ENCODE measurements at regions of chr9 and their contacts with region 1.

Region 1: DNA sequence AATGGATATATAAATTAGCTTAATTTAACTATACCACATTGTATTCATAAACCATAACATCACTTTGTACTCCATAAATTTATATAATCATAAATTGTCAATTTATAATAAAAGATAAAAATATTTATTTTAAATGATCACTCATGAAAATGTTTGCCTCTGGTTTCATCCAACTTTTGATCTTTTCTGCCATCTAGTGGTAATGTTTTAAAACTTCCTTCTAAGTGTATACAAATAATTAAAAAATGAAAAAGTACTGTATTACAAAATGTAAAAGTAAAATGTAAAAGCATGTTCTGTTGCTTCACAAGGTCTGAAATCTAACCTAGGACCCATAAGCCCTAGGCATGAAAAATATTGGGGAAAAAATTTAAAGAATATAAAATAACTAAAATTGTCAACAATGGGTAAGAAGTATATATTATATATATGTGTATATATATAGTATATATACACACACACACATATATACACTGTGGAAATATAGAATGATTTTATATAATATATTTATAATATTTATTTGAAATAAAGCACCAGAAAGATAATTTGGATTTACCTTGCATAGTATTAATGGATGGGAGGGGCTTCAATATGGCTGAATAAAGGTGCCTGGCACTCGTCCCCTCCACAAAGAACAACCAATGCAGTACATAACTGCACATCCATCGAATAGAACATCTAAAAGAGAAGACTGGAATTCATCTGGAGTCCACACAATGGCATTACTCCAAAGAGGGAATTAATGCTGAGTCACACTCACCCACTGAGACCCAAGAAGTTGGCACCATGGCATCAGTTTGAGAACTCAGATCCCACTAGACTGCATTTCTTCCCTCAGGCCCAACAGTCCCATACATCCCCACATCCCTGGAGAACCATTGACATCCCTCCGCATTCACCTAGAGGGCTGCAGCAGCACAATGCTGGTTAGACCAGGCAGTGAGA is 32.5 kb downstream of the ANXA1 start:
- DNase-seq: no peak
- ATAC-seq: no peak
- H3K4me3 ChIP-seq: no peak overlapping the region
- H3K27ac ChIP-seq: no peak overlapping the region
- H3K4me1 ChIP-seq: peaks cover 0 to 19% (median 0%) of the 10 kb centered on the region in 9 donors
- H3K27me3 ChIP-seq: peaks cover 0 to 3% (median 0%) of the 10 kb centered on the region in 7 donors
- CTCF ChIP-seq: peak; percentile 41 to 76 (median 59)

Region 2: DNA sequence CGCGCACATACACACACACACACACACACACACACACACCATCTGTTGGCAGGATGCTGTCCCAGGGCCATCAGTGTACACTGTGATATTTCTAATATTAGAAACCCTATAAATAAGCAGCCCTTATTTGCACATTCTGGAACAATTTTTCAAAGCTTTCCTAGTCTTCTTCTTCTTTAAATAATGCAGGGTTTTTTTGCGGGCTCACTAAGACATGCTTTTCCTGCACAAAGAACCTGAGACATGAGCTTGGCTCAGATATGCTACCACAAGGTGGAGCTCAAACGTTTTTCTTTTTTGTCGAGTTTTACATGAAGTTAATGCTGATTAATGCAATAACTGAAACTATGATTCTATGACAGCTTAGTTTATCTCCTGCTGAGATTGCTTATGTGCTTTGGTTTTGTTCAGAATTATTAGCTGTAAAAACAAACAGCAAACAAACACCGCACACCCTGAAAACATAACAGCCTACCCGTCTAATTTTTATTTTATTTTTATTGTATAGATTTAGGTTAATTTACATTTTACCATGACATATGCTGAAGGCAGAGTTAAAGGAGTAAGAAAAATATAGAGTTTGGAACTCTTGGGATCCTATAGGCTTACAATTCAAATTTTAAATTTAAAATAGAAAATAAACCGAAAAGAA is 327.1 kb before region 1 on chr9:
- intact Hi-C with region 1: loop called in 8 of 10 experiments (anchors 5 to 10 kb)
- DNase-seq: peak in 1 of 2 donors; percentile 45
- ATAC-seq: peak; percentile 61 to 91 (median 76)
- H3K4me3 ChIP-seq: no peak overlapping the region
- H3K27ac ChIP-seq: peak overlapping the region in 4 of 10 donors; percentile 20 to 52 (median 35)
- H3K4me1 ChIP-seq: peaks cover 0 to 29% (median 18%) of the 10 kb centered on the region in 9 donors
- H3K27me3 ChIP-seq: no peaks in the 10 kb centered on the region
- CTCF ChIP-seq: peak; percentile 25 to 78 (median 68)

Region 3: GRCh38 chr9:72871685-72872084 is 312.5 kb before region 1 on chr9:
- intact Hi-C with region 1: loop called in 3 of 10 experiments (anchors 5 to 10 kb)
- DNase-seq: no peak
- ATAC-seq: peak in 1 of 8 donors; percentile 29
- H3K4me3 ChIP-seq: peak overlapping the region in 3 of 10 donors; percentile 19 to 22 (median 21)
- H3K27ac ChIP-seq: no peak overlapping the region
- H3K4me1 ChIP-seq: peaks cover 0 to 19% (median 3%) of the 10 kb centered on the region in 9 donors
- H3K27me3 ChIP-seq: no peaks in the 10 kb centered on the region
- CTCF ChIP-seq: peak; percentile 13 to 69 (median 49)

Region 4: DNA sequence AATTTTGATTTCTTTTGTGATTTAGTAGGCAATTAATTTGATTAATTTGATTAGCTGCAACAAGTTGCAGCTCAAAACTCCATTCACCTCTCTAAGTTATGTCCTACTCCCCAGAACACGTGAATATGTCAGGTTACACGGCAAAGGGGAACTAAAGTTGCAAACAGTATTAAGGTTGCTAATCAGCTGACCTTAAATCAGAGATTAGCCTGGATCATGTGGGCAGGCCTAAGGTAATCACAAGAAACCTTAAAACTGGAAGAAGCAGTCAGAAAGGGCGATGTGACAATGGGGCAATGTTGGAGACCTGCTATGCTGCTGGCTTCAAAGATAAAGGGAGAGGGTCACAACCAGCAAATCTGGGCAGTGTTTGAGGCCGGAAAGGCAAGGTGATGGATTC is 79.8 kb before region 1 on chr9:
- intact Hi-C with region 1: loop called (anchors 1 to 5 kb)
- DNase-seq: no peak
- ATAC-seq: no peak
- H3K4me3 ChIP-seq: no peak overlapping the region
- H3K27ac ChIP-seq: no peak overlapping the region
- H3K4me1 ChIP-seq: no peaks in the 10 kb centered on the region
- H3K27me3 ChIP-seq: no peaks in the 10 kb centered on the region
- CTCF ChIP-seq: no peak

Region 5: GRCh38 chr9:73118898-73119554 is 65.2 kb before region 1 on chr9:
- intact Hi-C with region 1: no loop called
- DNase-seq: no peak
- ATAC-seq: no peak
- H3K4me3 ChIP-seq: no peak overlapping the region
- H3K27ac ChIP-seq: no peak overlapping the region
- H3K4me1 ChIP-seq: no peaks in the 10 kb centered on the region
- H3K27me3 ChIP-seq: no peaks in the 10 kb centered on the region
- CTCF ChIP-seq: no peak

Region 6: GRCh38 chr9:73132034-73132776 is 52.0 kb before region 1 on chr9:
- intact Hi-C with region 1: loop called in 1 of 10 experiments (anchors 5 kb)
- DNase-seq: peak; percentile 54 to 79
- ATAC-seq: peak; percentile 38 to 96 (median 94)
- H3K4me3 ChIP-seq: peak overlapping the region; percentile 8 to 64 (median 52)
- H3K27ac ChIP-seq: peak overlapping the region; percentile 14 to 91 (median 80)
- H3K4me1 ChIP-seq: peaks cover 0 to 29% (median 12%) of the 10 kb centered on the region in 9 donors
- H3K27me3 ChIP-seq: no peaks in the 10 kb centered on the region
- CTCF ChIP-seq: no peak